Psoas muscle (tissue), 8 donors: ENCODE measurements at regions of chr11 and their contacts with region 1.

Region 1: GRCh38 chr11:126194121-126194543 is 17.3 kb downstream of the RPUSD4 start:
- DNase-seq: no peak
- ATAC-seq: peak in 1 of 4 donors; percentile 60
- H3K4me3 ChIP-seq: no peak overlapping the region
- H3K27ac ChIP-seq: peak overlapping the region; percentile 25
- H3K4me1 ChIP-seq: peaks cover 56% of the 10 kb centered on the region
- H3K27me3 ChIP-seq: no peaks in the 10 kb centered on the region
- CTCF ChIP-seq: peak; percentile 74

Region 2: GRCh38 chr11:125923012-125923579 is 271.0 kb before region 1 on chr11:
- intact Hi-C with region 1: loop called (anchors 1 to 2 kb)
- DNase-seq: peak in 1 of 2 donors; percentile 39
- ATAC-seq: peak; percentile 75 to 93 (median 85)
- H3K4me3 ChIP-seq: no peak overlapping the region
- H3K27ac ChIP-seq: no peak overlapping the region
- H3K4me1 ChIP-seq: no peaks in the 10 kb centered on the region
- H3K27me3 ChIP-seq: no peaks in the 10 kb centered on the region
- CTCF ChIP-seq: peak; percentile 85

Region 3: DNA sequence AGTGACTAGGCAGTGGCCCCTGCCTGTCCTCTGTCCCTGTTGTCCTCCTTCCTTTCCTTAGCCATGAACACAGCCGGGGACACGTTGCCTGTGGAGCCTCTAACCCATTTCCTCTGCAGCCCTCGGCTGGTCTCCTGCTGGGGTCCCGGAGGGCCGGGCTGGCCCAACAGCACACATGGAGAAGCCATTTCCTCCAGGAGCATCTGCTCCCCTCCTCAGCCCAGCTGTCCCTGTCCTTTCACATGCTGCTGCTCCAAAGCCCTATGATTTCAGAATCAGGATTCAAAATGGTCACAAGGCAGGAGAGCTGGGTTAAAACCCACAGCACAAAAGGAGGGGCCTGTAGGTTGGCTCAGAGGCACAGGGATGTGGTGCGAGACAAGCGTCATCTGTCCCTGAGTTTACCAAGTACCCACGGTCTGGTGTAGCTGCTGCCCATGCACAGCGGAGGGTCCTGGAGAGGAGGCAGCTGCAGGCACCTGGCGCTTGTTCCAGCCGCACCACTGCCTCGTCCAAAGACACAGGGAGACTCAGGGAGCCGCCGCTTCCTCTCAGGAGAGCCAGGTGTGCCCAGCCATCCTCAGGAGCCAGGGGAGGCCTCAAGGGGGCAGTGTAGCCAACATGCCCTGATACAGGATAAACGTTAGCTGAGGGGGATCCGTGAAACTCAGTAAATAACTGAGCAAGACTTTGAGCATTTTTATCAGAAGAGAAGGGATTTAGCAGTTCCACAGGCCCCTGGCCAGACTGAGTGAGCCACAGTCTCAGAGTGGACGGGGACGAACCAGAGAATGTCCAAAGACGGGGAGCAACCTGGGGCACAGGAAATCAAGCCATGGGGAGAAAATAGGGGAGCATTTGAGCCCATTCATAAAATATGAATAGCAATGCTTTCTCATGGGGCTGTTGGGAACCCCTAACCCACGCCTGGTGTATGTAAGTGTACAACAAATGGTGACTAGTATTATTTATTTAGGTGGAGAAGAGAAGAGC is 252.2 kb before region 1 on chr11:
- intact Hi-C with region 1: loop called (anchors 1 to 5 kb)
- DNase-seq: peak; percentile 54 to 74
- ATAC-seq: peak; percentile 72 to 92 (median 78)
- H3K4me3 ChIP-seq: no peak overlapping the region
- H3K27ac ChIP-seq: no peak overlapping the region
- H3K4me1 ChIP-seq: no peaks in the 10 kb centered on the region
- H3K27me3 ChIP-seq: no peaks in the 10 kb centered on the region
- CTCF ChIP-seq: peak; percentile 67

Region 4: GRCh38 chr11:126062679-126063506 is 131.2 kb before region 1 on chr11 and contains the start of gene CDON:
- intact Hi-C with region 1: loop called (anchors 2 to 5 kb)
- DNase-seq: peak; percentile 93 to 96
- ATAC-seq: peak; percentile 99
- H3K4me3 ChIP-seq: peak within 1 kb of the TSS; percentile 79
- H3K27ac ChIP-seq: peak within 1 kb of the TSS; percentile 80
- H3K4me1 ChIP-seq: peaks cover 12% of the 10 kb centered on the region
- H3K27me3 ChIP-seq: peaks cover 0 to 16% (median 0%) of the 10 kb centered on the region in 3 donors
- CTCF ChIP-seq: no peak
- total RNA-seq, gene CDON: 1.3 to 5.6 (median 1.5) TPM

Region 5: DNA sequence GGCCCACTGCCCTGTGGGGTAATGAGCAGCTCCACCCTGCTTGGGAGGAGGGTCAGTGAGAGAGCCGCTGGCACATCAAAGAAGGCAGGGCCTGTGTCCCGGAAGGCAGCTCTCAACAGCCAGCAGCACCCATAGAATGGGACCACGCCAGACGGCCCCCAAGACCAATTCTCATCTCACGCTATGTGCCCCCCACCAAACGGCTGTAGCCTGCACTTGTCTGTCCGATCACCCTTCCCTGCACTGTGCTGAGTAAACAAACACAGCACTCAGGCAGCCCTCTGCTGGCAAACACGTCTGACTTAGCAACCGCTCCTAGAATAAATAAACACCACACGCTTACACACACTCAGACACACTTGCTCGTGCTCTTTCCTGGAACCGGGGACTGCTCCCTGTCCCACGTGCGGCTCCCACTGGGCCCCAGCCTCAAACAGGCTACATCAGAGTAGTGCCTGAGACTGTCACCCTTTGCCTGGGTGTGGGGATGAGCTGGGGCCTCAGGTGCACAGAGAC is 78.3 kb before region 1 on chr11:
- intact Hi-C with region 1: loop called in 1 of 2 experiments (anchors 5 kb)
- DNase-seq: peak; percentile 61 to 71
- ATAC-seq: peak; percentile 62 to 73 (median 68)
- H3K4me3 ChIP-seq: no peak overlapping the region
- H3K27ac ChIP-seq: peak overlapping the region; percentile 65
- H3K4me1 ChIP-seq: peaks cover 32% of the 10 kb centered on the region
- H3K27me3 ChIP-seq: peaks cover 0 to 1% (median 0%) of the 10 kb centered on the region in 3 donors
- CTCF ChIP-seq: peak; percentile 15